Caco-2 (cell line): ENCODE measurements at regions of chr20 and their contacts with region 1.

Region 1: GRCh38 chr20:39264506-39265172 is 302.5 kb downstream of the DHX35 start:
- DNase-seq: peak; percentile 77 to 81
- H3K4me3 ChIP-seq: no peak overlapping the region
- H3K4me3 Mint-ChIP-seq: no peak overlapping the region
- H3K27ac Mint-ChIP-seq: no peak overlapping the region
- H3K4me1 ChIP-seq: no peaks in the 10 kb centered on the region
- H3K4me1 Mint-ChIP-seq: no peaks in the 10 kb centered on the region
- H3K27me3 ChIP-seq: no peaks in the 10 kb centered on the region
- H3K27me3 Mint-ChIP-seq: peaks cover 23% of the 10 kb centered on the region
- CTCF ChIP-seq: peak; percentile 98 to 99

Region 2: GRCh38 chr20:39398656-39399055 is 134.0 kb after region 1 on chr20:
- CTCF ChIA-PET with region 1: interaction called, 22 read pairs
- POLR2A ChIA-PET with region 1: no interaction called
- intact Hi-C with region 1: loop called (anchors 1 kb)
- DNase-seq: peak in 1 of 2 experiments; percentile 24
- H3K4me3 ChIP-seq: no peak overlapping the region
- H3K4me3 Mint-ChIP-seq: no peak overlapping the region
- H3K27ac Mint-ChIP-seq: no peak overlapping the region
- H3K4me1 ChIP-seq: no peaks in the 10 kb centered on the region
- H3K4me1 Mint-ChIP-seq: no peaks in the 10 kb centered on the region
- H3K27me3 ChIP-seq: peaks cover 3% of the 10 kb centered on the region; the same call in 1 of the 2 replicates
- H3K27me3 Mint-ChIP-seq: peaks cover 23% of the 10 kb centered on the region
- CTCF ChIP-seq: peak in 1 of 2 experiments; percentile 41

Region 3: DNA sequence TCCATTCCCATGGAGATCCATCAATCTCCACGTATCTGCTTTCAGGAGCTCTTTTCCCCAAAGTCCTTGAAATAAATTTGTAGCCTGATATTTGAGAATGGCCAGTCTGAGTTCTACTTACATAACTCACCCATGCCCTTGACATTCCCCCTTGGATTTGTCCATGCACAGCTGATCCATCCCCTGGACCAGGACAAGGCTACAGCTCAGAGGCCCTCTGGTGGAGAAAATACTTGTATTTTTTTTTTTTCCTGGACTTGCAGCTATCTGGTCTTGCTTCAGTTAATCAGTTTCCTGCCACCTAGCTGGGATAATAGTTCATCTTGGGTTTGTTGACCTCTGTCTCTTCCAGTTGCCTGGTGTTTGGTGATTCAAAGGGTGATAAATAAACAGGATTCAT is 165.1 kb after region 1 on chr20:
- CTCF ChIA-PET with region 1: interaction called, 30 read pairs
- POLR2A ChIA-PET with region 1: no interaction called
- intact Hi-C with region 1: loop called (anchors 1 kb)
- DNase-seq: peak in 1 of 2 experiments; percentile 54
- H3K4me3 ChIP-seq: no peak overlapping the region
- H3K4me3 Mint-ChIP-seq: no peak overlapping the region
- H3K27ac Mint-ChIP-seq: no peak overlapping the region
- H3K4me1 ChIP-seq: no peaks in the 10 kb centered on the region
- H3K4me1 Mint-ChIP-seq: no peaks in the 10 kb centered on the region
- H3K27me3 ChIP-seq: no peaks in the 10 kb centered on the region
- H3K27me3 Mint-ChIP-seq: no peaks in the 10 kb centered on the region
- CTCF ChIP-seq: peak; percentile 65 to 75